ENCODE measurements at regions of chr4 and their contacts with region 1.

Region 1: GRCh38 chr4:172830295-172830764 is 338.3 kb upstream of the GALNT7 start:
- DNase-seq: no peak
- H3K4me3 ChIP-seq: no peak overlapping the region
- H3K4me3 Mint-ChIP-seq: no peak overlapping the region
- H3K27ac Mint-ChIP-seq: peak overlapping the region; percentile 55
- H3K4me1 ChIP-seq: 0 out of 2 replicates have a peak, but pooled peaks cover 4% of the 10 kb centered on the region
- H3K4me1 Mint-ChIP-seq: peaks cover 6% of the 10 kb centered on the region
- H3K27me3 ChIP-seq: no peaks in the 10 kb centered on the region
- H3K27me3 Mint-ChIP-seq: no peaks in the 10 kb centered on the region
- CTCF ChIP-seq: peak in 1 of 2 experiments; percentile 40

Region 2: DNA sequence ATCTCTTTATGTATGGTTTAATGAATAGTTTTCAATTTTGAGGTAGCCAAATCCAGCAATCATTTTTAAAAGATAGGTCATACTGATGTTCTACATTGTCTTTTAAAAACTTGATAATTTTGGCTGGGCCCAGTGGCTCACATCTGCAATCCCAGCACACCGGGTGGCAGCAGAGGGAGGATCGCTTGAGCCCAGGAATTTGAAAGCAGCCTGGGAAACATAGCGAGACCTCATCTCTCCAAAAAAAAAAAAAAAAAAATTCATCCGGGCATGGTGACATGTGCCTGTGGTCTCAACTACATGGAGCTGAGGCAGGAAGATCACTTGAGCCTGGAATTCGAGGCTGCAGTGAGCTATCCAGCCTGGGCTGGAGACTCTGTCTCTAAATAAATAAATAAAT is 597.4 kb before region 1 on chr4:
- CTCF ChIA-PET with region 1: no interaction called
- POLR2A ChIA-PET with region 1: no interaction called
- intact Hi-C with region 1: loop called (anchors 2 kb)
- DNase-seq: peak in 1 of 2 experiments; percentile 5
- H3K4me3 ChIP-seq: no peak overlapping the region
- H3K4me3 Mint-ChIP-seq: no peak overlapping the region
- H3K27ac Mint-ChIP-seq: no peak overlapping the region
- H3K4me1 ChIP-seq: no peaks in the 10 kb centered on the region
- H3K4me1 Mint-ChIP-seq: no peaks in the 10 kb centered on the region
- H3K27me3 ChIP-seq: no peaks in the 10 kb centered on the region
- H3K27me3 Mint-ChIP-seq: no peaks in the 10 kb centered on the region
- CTCF ChIP-seq: peak in 1 of 2 experiments; percentile 14

Region 3: GRCh38 chr4:172245516-172245915 is 584.8 kb before region 1 on chr4:
- CTCF ChIA-PET with region 1: no interaction called
- POLR2A ChIA-PET with region 1: no interaction called
- intact Hi-C with region 1: loop called (anchors 1 kb)
- DNase-seq: no peak
- H3K4me3 ChIP-seq: no peak overlapping the region
- H3K4me3 Mint-ChIP-seq: no peak overlapping the region
- H3K27ac Mint-ChIP-seq: no peak overlapping the region
- H3K4me1 ChIP-seq: no peaks in the 10 kb centered on the region
- H3K4me1 Mint-ChIP-seq: no peaks in the 10 kb centered on the region
- H3K27me3 ChIP-seq: no peaks in the 10 kb centered on the region
- H3K27me3 Mint-ChIP-seq: no peaks in the 10 kb centered on the region
- CTCF ChIP-seq: no peak

Region 4: DNA sequence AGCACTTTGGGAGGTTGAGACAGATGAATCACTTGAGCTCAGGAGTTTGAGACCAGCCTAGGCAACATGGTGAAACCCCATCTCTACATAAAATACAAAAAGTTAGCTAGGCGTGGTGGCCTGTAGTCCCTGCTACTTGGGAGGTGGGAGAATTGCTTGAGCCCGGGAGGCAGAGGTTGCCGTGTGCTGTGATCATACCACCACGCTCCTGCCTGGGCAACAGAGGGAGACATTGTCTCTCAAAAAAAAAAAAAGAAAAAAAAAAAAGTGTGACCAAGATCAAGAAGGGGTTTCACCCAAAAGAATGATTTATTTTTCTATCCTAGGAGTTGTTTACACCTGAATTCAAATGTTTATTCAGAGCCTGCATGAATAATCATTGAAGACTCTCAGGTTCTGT is 234.1 kb before region 1 on chr4:
- CTCF ChIA-PET with region 1: no interaction called
- POLR2A ChIA-PET with region 1: no interaction called
- intact Hi-C with region 1: loop called (anchors 1 kb)
- DNase-seq: peak in 1 of 2 experiments; percentile 5
- H3K4me3 ChIP-seq: no peak overlapping the region
- H3K4me3 Mint-ChIP-seq: no peak overlapping the region
- H3K27ac Mint-ChIP-seq: no peak overlapping the region
- H3K4me1 ChIP-seq: no peaks in the 10 kb centered on the region
- H3K4me1 Mint-ChIP-seq: no peaks in the 10 kb centered on the region
- H3K27me3 ChIP-seq: no peaks in the 10 kb centered on the region
- H3K27me3 Mint-ChIP-seq: no peaks in the 10 kb centered on the region
- CTCF ChIP-seq: peak in 1 of 2 experiments; percentile 21

Region 5: DNA sequence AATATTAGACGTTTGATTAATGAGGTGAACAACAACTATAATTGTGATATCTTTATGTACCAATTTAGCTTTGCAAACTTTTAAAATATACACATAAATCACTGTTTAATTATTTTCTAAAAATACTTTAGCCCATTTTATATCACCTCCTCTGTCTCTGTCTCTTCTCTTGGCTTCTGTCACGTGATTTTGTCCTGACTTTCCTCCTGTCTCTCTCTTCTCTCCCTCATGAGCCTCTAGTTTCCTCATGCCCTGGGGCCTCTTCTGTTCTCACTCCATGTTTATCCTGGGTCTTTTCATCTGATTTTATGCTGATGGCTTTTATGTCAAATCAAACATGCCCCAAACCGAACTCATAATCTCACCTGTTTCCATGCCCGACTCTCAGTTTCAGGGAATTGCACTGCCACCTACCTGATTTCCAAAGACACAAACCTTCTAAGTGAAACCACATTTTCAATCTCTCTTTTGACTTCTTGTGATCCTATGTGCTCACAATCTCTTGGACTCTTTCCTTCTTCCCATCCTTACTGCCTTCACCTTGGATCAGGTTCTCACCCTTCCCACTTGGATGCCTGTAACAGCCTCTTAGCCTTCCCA is 35.3 kb after region 1 on chr4:
- CTCF ChIA-PET with region 1: no interaction called
- POLR2A ChIA-PET with region 1: no interaction called
- intact Hi-C with region 1: no loop called
- DNase-seq: no peak
- H3K4me3 ChIP-seq: no peak overlapping the region
- H3K4me3 Mint-ChIP-seq: no peak overlapping the region
- H3K27ac Mint-ChIP-seq: no peak overlapping the region
- H3K4me1 ChIP-seq: no peaks in the 10 kb centered on the region
- H3K4me1 Mint-ChIP-seq: peaks cover 7% of the 10 kb centered on the region
- H3K27me3 ChIP-seq: no peaks in the 10 kb centered on the region
- H3K27me3 Mint-ChIP-seq: peaks cover 2% of the 10 kb centered on the region
- CTCF ChIP-seq: no peak

Measured in Caco-2 (cell line).